Ovary (tissue), 10 donors: ENCODE measurements at regions of chr2 and their contacts with region 1.

Region 1: GRCh38 chr2:176106581-176107539 is at the start of gene HOXD11:
- DNase-seq: peak in 2 of 5 donors; percentile 36 to 53
- H3K4me3 ChIP-seq: peak within 1 kb of the TSS; percentile 43
- H3K27ac ChIP-seq: no peak within 1 kb of the TSS
- H3K4me1 ChIP-seq: peaks cover 5% of the 10 kb centered on the region
- H3K27me3 ChIP-seq: peaks cover 1% of the 10 kb centered on the region
- CTCF ChIP-seq: no peak
- EP300 ChIP-seq: no peak
- POLR2A ChIP-seq: no peak
- total RNA-seq, gene HOXD11: 0.61 to 1.3 (median 1.1) TPM in 3 of 7 donors, not detected in the others

Region 2: DNA sequence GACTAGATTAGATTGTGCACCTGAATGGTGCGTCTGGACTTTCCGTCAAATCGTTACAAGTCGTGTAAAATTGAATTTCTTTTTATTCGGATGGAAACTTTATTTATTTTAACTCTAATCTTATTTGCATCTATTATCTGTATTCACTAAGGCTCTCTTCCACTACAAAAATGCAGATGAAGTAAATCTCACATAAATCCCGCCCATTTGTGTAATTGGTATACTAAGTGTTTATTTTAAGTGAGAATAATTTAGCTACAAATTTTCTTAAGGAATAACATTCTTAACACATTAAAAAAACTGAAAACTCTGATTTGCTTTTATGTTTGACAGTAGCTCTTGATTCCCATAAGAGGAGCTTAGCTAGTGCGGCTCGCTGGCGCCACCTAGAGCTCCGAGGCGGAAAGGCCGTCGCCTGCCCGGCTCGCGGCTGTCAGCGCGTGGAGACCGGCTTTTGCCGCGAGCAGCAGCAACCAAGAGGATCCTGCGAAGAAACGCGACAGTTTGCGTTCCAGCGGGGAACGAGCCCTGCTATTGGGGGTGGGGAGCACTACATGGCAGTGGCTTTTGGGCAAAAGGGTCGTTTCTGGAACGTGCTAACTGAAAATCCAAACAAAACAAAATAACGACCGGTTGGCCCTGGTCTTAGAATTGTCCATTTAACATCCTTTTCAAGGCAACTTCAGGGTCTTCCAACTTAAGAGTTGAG is 1765.4 kb before region 1 on chr2:
- intact Hi-C with region 1: loop called in 1 of 4 experiments (anchors 10 kb)
- DNase-seq: peak; percentile 72 to 91 (median 86)
- H3K4me3 ChIP-seq: no peak overlapping the region
- H3K27ac ChIP-seq: no peak overlapping the region
- H3K4me1 ChIP-seq: peaks cover 7% of the 10 kb centered on the region
- H3K27me3 ChIP-seq: peaks cover 10% of the 10 kb centered on the region
- CTCF ChIP-seq: peak; percentile 82 to 86 (median 84)
- EP300 ChIP-seq: no peak
- POLR2A ChIP-seq: no peak

Region 3: GRCh38 chr2:174752403-174753037 is 1354.3 kb before region 1 on chr2:
- intact Hi-C with region 1: no loop called
- DNase-seq: no peak
- H3K4me3 ChIP-seq: no peak overlapping the region
- H3K27ac ChIP-seq: no peak overlapping the region
- H3K4me1 ChIP-seq: no peaks in the 10 kb centered on the region
- H3K27me3 ChIP-seq: no peaks in the 10 kb centered on the region
- CTCF ChIP-seq: no peak
- EP300 ChIP-seq: no peak
- POLR2A ChIP-seq: no peak